Aorta (tissue), 5 donors: ENCODE measurements at regions of chr9 and their contacts with region 1.

Region 1: DNA sequence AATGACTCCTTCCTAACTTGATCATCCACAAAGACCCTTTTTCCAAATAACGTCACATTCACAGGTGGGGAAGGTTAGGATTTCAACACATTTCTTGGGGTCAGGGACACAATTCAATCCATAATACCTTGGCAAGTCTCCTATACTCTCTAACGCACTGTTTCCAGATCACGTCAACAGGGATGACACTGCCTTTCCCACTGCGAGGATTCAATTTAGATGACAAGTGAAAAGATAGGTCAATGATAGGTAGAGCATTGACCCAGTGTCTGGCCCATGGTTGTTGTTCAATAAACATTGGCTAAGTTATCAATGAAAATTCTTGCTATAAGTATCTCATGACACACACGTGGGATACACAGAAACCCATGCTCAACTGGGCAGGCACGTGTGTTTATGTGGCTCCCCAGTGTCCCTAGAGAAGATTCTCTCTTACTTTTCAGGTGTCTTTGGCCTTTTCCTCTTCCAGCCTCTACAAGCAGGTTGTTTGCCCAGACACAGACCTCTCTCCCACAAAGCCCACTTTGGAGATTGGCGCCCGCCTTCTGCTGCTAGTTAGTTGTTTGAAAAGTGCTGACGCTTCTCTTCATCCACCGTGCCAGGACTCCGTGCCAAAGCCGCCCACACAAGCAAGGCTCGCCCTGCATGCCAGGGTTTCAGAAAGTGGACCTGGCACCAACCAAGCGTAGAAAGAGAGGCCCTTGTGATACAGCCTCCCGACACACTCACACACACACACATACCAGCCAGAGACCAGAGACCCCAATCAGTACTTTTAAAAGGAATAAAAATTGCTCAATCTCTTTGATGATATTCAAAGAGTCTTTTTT is 594.5 kb downstream of the BNC2 start:
- DNase-seq: peak; percentile 86 to 93
- ATAC-seq: peak; percentile 70
- H3K4me3 ChIP-seq: no peak overlapping the region
- H3K27ac ChIP-seq: no peak overlapping the region
- H3K4me1 ChIP-seq: no peaks in the 10 kb centered on the region
- H3K27me3 ChIP-seq: no peaks in the 10 kb centered on the region

Region 2: DNA sequence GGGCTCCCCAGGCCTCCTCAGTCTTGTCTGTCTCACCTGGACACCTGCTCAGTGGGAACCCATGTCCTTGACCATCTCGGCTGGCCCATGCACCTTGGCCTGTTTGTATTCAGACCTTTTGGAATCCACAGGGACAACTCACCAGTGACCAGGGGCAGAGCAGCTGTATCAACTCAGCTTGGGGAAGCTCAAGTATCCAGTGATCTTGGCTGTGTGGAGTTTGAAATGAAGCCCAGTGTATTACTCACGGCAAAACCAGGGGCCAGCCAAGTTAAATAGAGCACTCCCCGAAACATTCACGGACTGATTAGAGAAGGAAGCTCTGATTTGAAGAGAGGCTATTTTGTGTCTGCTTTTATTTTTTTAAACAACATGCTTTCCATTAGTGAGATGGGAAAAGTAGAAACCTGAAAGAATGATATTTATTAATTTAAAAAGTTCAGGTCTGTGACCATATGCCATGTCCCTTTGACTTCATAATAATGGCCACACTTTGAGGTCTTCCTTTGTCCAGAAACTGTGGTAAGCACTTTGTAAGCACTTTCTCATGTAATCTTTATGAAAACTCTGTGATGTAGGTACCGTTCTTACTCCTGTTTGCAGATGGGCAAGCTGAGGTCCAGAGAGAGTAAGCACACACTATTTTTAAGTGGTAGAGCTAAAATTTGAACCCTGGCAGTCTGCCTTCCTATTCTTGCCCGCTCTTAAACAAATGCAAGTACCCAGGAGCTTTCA is 62.1 kb before region 1 on chr9:
- intact Hi-C with region 1: loop called in 1 of 2 experiments (anchors 10 kb)
- DNase-seq: peak; percentile 76 to 81
- ATAC-seq: peak; percentile 94
- H3K4me3 ChIP-seq: no peak overlapping the region
- H3K27ac ChIP-seq: peak overlapping the region; percentile 19 to 79
- H3K4me1 ChIP-seq: peaks cover 0 to 2% of the 10 kb centered on the region in 2 donors
- H3K27me3 ChIP-seq: no peaks in the 10 kb centered on the region

Region 3: DNA sequence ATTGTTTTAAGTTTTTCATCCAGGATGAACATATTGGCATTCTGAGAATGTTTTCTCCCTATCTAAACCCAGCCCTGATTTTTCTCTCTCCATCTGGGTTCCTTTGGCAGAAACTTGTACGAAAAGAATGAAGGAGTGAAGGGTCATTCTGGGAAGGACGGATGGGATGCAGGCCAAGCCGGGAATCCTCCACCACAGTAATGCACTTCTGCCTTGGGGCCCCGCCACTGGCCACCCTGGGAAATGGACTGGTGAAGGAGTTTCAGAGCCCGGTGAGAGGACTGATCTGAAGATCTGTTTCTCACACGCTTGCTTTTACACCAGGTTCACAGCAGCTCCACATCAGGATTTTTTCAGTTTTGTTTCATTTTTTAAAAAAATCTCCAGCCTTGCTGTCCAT is 39.7 kb after region 1 on chr9:
- intact Hi-C with region 1: no loop called
- DNase-seq: no peak
- ATAC-seq: no peak
- H3K4me3 ChIP-seq: no peak overlapping the region
- H3K27ac ChIP-seq: no peak overlapping the region
- H3K4me1 ChIP-seq: peaks cover 4 to 6% of the 10 kb centered on the region in 2 donors
- H3K27me3 ChIP-seq: no peaks in the 10 kb centered on the region

Region 4: GRCh38 chr9:16368237-16369087 is 92.5 kb after region 1 on chr9:
- intact Hi-C with region 1: no loop called
- DNase-seq: no peak
- ATAC-seq: no peak
- H3K4me3 ChIP-seq: no peak overlapping the region
- H3K27ac ChIP-seq: no peak overlapping the region
- H3K4me1 ChIP-seq: no peaks in the 10 kb centered on the region
- H3K27me3 ChIP-seq: no peaks in the 10 kb centered on the region

Region 5: GRCh38 chr9:16521868-16522411 is 245.9 kb after region 1 on chr9:
- intact Hi-C with region 1: no loop called
- DNase-seq: peak in 1 of 2 donors; percentile 68
- ATAC-seq: peak; percentile 84
- H3K4me3 ChIP-seq: no peak overlapping the region
- H3K27ac ChIP-seq: peak overlapping the region; percentile 18 to 64
- H3K4me1 ChIP-seq: peaks cover 0 to 9% of the 10 kb centered on the region in 2 donors
- H3K27me3 ChIP-seq: no peaks in the 10 kb centered on the region

Region 6: GRCh38 chr9:16985559-16986348 is 709.7 kb after region 1 on chr9:
- intact Hi-C with region 1: loop called in 1 of 2 experiments (anchors 10 kb)
- DNase-seq: peak; percentile 86 to 89
- ATAC-seq: peak; percentile 92
- H3K4me3 ChIP-seq: no peak overlapping the region
- H3K27ac ChIP-seq: peak overlapping the region; percentile 39 to 95
- H3K4me1 ChIP-seq: peaks cover 0 to 3% of the 10 kb centered on the region in 2 donors
- H3K27me3 ChIP-seq: no peaks in the 10 kb centered on the region